HepG2 (cell line): ENCODE measurements at regions of chr6 and their contacts with region 1.

Region 1: GRCh38 chr6:34236131-34236996 is at the start of gene HMGA1:
- DNase-seq: peak; percentile 81
- ATAC-seq: peak; percentile 72
- H3K4me3 ChIP-seq: peak within 1 kb of the TSS; percentile 79 to 91 (median 86)
- H3K27ac ChIP-seq: peak within 1 kb of the TSS; percentile 68
- H3K4me1 ChIP-seq: peaks cover 31% of the 10 kb centered on the region
- H3K27me3 ChIP-seq: peaks cover 0 to 2% of the 10 kb centered on the region in 2 experiments; a peak in 2 of 5 replicates
- CTCF ChIP-seq: no peak
- EP300 ChIP-seq: no peak
- POLR2A ChIP-seq: peak; percentile 86 to 87
- RAD21 ChIP-seq: no peak
- total RNA-seq, gene HMGA1: 145 and 150 TPM in 2 replicates

Region 2: DNA sequence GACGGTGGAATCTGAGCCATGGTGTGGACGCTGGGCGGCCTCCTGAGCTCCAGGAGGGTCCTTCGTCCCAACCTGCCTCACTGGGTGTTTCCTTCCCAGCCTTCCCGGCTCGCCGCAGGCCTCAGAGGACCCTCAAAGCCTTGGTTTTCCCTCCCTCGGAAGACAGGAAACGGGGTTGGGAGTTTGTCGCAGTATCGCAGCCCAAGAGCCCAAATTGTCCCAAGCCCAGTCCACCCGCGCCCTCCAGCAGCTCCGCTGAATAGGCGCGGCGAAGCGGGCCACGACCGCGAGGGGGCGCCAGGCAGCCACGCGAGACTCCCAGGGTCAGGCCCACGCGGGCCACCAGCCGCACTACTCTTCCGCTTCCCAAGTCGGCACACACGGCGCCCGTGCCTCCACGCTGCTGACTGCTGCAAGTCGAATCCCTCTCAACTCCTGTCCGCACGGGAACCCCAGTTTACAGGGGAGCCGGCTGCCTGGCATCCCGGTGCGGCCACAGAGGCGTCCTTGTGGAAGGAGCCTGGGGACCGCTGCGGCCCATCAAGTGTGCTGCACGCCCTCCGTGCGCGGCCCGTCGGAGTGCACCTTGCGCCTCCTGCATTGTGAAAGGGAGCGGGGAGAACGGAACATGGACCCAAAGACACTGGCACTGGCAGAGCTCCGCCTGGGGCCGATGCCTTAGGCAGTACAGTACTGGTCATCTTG is 40.1 kb before region 1 on chr6:
- CTCF ChIA-PET with region 1: interaction called, 4 read pairs
- POLR2A ChIA-PET with region 1: interaction called, 4 read pairs
- in situ Hi-C with region 1: loop called (anchors 5 kb)
- intact Hi-C with region 1: loop called (anchors 2 kb)
- DNase-seq: no peak
- ATAC-seq: peak; percentile 90
- H3K4me3 ChIP-seq: peak overlapping the region; percentile 55 to 74 (median 59)
- H3K27ac ChIP-seq: no peak overlapping the region
- H3K4me1 ChIP-seq: peaks cover 13% of the 10 kb centered on the region; the same call in 1 of the 2 replicates
- H3K27me3 ChIP-seq: peaks cover 8 to 26% of the 10 kb centered on the region in 2 experiments; a peak in 4 of 5 replicates
- CTCF ChIP-seq: peak; percentile 100
- EP300 ChIP-seq: no peak
- POLR2A ChIP-seq: no peak
- RAD21 ChIP-seq: peak; percentile 93

Region 3: DNA sequence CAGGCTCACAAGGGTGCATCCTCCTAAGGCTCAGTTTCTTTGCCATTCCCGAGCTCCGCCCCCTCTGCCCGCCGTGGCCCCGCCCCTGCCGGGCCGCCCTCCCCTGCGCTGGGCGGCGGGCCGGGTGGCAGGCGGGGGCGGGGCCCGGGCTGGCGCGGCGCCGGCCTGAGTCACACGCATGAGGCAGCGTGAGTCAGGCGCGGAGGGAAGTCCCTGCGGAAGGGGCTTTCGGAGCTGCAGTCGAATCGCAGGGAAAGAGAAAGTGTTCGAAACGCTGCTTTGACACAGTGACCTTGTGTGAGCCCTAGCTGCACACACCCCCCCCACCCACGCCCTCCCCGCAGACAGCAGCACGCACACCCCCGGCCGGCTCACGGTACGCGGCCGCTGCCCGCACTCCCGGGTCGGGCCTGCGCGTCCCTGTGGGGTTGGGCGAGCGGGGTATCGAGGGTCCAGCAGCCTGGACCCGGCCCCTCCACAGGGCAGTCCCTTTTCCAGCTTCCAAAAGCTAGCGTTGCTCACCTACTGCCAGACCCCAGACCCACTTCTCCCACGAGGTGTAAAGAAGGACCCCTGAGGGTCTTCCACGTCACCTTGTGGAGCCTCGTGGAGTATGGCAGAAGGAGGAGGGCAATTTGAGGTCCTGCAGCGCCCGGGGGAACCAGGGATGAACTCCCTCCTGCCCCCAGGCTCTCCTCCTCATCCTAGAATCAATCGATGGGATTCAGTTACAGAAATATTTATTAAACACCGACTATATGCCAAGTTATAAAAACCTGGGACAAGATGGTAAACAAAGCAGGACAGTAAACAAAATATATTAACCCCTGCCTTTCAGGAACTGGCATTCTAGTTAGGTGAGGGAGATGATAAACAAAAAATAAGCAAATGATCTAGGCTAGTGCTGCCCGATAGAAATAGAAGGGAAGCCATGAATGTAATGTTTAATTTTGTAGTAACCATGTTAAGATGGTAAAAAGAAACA is 12.1 kb before region 1 on chr6:
- CTCF ChIA-PET with region 1: no interaction called
- POLR2A ChIA-PET with region 1: interaction called, 24 read pairs
- in situ Hi-C with region 1: no loop called
- intact Hi-C with region 1: no loop called
- DNase-seq: peak; percentile 81
- ATAC-seq: peak; percentile 91
- H3K4me3 ChIP-seq: peak overlapping the region; percentile 60 to 76 (median 72)
- H3K27ac ChIP-seq: peak overlapping the region; percentile 38
- H3K4me1 ChIP-seq: peaks cover 38% of the 10 kb centered on the region
- H3K27me3 ChIP-seq: peaks cover 3 to 25% of the 10 kb centered on the region in 2 experiments; a peak in 2 of 5 replicates
- CTCF ChIP-seq: no peak
- EP300 ChIP-seq: peak in 1 of 2 experiments; percentile 24; a peak in 1 of 4 replicates
- POLR2A ChIP-seq: peak; percentile 88 to 93
- RAD21 ChIP-seq: peak; percentile 9; the same call in 1 of the 2 replicates

Region 4: GRCh38 chr6:34301408-34301807 is 65.0 kb after region 1 on chr6:
- CTCF ChIA-PET with region 1: no interaction called
- POLR2A ChIA-PET with region 1: no interaction called
- in situ Hi-C with region 1: no loop called
- intact Hi-C with region 1: no loop called
- DNase-seq: no peak
- ATAC-seq: no peak
- H3K4me3 ChIP-seq: no peak overlapping the region
- H3K27ac ChIP-seq: no peak overlapping the region
- H3K4me1 ChIP-seq: peaks cover 22% of the 10 kb centered on the region
- H3K27me3 ChIP-seq: no peaks in the 10 kb centered on the region
- CTCF ChIP-seq: no peak
- EP300 ChIP-seq: no peak
- POLR2A ChIP-seq: no peak
- RAD21 ChIP-seq: no peak